HepG2 (cell line): ENCODE measurements at regions of chr2 and their contacts with region 1.

Region 1: DNA sequence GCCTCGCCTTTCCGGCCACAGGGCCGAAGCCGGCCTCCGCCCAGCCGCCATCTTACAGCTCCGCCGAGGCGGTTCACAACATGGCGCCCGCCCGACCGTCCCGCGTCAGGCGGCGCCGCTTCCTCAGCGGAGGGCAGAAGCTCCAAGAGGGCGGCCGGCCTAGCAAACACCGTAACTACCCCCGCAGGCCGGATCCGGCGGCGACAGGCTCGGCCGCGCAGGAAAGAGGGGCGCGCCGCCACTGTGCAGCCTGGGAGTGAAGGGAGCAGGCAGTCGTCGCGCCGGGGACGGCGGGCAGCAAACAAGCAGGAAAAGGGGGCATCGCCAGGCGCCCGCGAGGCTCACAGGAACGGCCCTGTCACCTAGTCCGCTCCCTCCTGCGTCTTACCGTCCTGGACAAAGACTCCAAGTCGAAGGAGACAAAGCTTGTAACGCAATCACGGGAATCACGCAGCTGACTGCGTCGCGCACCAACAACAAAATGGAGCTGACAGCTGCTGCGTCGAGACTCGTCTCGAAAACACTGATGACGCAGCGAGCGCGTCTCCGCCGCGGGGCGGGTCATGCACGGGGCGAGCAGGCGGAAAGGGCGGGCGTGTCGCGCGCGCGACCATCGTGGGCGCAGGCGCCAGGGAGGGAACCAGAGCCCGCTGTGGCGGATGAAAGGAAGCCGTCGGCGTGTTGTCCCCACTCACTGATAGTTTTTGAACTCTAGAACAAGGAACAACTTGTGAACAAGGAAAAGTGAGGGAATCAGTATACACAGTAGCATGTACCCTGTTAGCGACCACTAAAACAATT is at the start of gene CLK1:
- DNase-seq: peak; percentile 89
- ATAC-seq: peak; percentile 80
- H3K4me3 ChIP-seq: peak within 1 kb of the TSS; percentile 91 to 99 (median 97)
- H3K27ac ChIP-seq: peak within 1 kb of the TSS; percentile 98
- H3K4me1 ChIP-seq: peaks cover 55% of the 10 kb centered on the region
- H3K27me3 ChIP-seq: no peaks in the 10 kb centered on the region; a peak in 1 of 5 replicates
- CTCF ChIP-seq: no peak; the same call in 1 of the 2 replicates
- EP300 ChIP-seq: peak; percentile 27 to 54; a peak in 2 of 4 replicates
- POLR2A ChIP-seq: peak; percentile 99 to 100
- RAD21 ChIP-seq: peak; percentile 54
- total RNA-seq, gene CLK1: 35.2 and 66.6 TPM in 2 replicates

Region 2: DNA sequence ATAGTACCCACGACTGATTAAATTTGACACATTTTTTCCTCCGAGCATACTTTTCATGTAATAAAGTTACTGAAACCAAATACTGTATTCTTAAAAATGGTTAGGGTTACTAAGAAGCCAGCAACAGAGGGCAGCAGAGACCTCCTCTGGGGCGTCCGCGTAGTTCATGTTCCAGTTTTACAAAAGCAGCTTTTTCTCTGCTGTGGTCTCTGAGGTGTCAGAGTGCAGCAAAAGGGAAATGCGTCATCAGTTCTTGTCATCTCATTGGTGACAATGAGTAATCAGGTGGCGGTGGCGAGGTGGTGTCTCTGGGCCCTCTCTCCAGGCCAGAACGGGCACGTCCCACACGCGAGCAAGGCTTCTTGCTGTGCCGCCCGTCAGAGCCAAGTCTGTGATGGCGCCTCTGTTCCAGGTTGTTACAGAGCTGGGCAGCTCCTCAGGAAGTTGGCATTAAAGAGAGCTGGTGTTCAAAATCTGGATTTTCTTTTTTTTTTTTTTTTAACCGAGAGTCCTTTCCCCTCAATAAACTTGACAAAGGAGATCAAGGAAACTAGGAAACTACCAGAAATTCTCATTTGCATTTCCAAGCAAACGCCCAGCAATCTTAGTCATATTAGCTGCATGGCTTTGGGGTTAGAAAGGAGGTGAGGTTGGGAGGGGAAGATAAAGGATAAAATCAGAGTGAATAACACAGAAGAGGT is 151.2 kb before region 1 on chr2:
- CTCF ChIA-PET with region 1: no interaction called
- POLR2A ChIA-PET with region 1: interaction called, 21 read pairs
- in situ Hi-C with region 1: no loop called
- intact Hi-C with region 1: no loop called
- DNase-seq: peak; percentile 96
- ATAC-seq: peak; percentile 94
- H3K4me3 ChIP-seq: peak overlapping the region; percentile 35 to 65 (median 50); a peak in 5 of 6 replicates
- H3K27ac ChIP-seq: peak overlapping the region; percentile 41
- H3K4me1 ChIP-seq: peaks cover 20% of the 10 kb centered on the region
- H3K27me3 ChIP-seq: no peaks in the 10 kb centered on the region; a peak in 1 of 5 replicates
- CTCF ChIP-seq: peak; percentile 94
- EP300 ChIP-seq: peak in 1 of 2 experiments; percentile 47; a peak in 1 of 4 replicates
- POLR2A ChIP-seq: peak; percentile 74 to 92
- RAD21 ChIP-seq: peak; percentile 93

Region 3: DNA sequence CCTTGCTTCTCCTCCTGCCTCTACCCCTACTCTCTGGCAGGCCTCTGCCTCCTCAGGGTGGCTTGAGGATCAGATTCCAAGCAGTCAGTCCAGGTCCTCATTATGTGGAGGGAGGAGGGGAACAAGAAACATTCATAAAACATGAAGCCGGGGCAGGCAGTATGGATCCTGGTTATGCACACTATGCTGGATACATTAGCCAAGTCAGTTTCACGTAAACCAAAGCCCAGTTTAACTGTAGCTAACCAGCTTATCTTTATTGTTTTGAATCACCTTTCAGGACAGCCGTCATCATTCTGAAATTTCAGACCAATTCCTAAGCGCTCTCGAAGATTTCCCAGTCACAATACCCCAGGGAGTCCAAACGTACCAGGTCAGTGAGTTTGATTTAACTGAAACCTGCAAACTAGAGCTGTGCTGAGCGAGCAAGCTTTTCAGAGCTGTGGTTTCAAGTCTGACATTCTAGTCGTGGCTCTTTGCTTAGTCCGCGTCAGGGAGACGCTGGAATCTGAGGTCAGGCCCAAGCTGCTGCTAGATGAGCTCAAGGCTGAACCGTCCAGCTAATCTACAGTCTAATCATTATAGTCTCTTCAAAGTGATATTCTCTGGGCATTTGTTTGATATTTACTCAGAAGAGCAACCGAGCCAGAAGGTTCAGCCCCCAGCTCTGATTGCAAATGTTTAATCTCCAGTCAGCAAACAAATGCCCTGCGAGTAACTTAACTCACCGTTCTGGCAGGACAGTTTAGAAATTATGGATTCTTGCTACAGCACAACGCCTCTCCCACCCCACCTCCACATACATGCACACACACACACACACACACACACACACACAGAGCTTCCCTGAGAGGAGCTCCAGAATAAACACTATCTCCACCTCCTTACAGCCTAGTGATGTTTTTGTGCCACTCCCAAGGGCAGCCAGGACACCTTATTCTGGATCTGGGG is 116.4 kb before region 1 on chr2:
- CTCF ChIA-PET with region 1: interaction called, 4 read pairs
- POLR2A ChIA-PET with region 1: interaction called, 19 read pairs
- in situ Hi-C with region 1: no loop called
- intact Hi-C with region 1: no loop called
- DNase-seq: peak; percentile 99
- ATAC-seq: peak; percentile 94
- H3K4me3 ChIP-seq: peak overlapping the region; percentile 30 to 51 (median 46)
- H3K27ac ChIP-seq: peak overlapping the region; percentile 68
- H3K4me1 ChIP-seq: peaks cover 57% of the 10 kb centered on the region
- H3K27me3 ChIP-seq: peaks cover 0 to 7% of the 10 kb centered on the region in 2 experiments; a peak in 2 of 5 replicates
- CTCF ChIP-seq: no peak
- EP300 ChIP-seq: peak; percentile 73 to 91; a peak in 3 of 4 replicates
- POLR2A ChIP-seq: peak in 1 of 2 experiments; percentile 69; a peak in 2 of 4 replicates
- RAD21 ChIP-seq: no peak

Region 4: GRCh38 chr2:200811336-200812121 is 52.8 kb before region 1 on chr2 and contains the start of gene BZW1:
- CTCF ChIA-PET with region 1: no interaction called
- POLR2A ChIA-PET with region 1: interaction called, 16 read pairs
- in situ Hi-C with region 1: no loop called
- intact Hi-C with region 1: loop called (anchors 2 kb)
- DNase-seq: peak; percentile 95
- ATAC-seq: peak; percentile 89
- H3K4me3 ChIP-seq: peak within 1 kb of the TSS; percentile 89 to 99 (median 92)
- H3K27ac ChIP-seq: peak within 1 kb of the TSS; percentile 95
- H3K4me1 ChIP-seq: peaks cover 52% of the 10 kb centered on the region
- H3K27me3 ChIP-seq: no peaks in the 10 kb centered on the region; a peak in 1 of 5 replicates
- CTCF ChIP-seq: no peak; the same call in 1 of the 2 replicates
- EP300 ChIP-seq: peak in 1 of 2 experiments; percentile 22; a peak in 1 of 4 replicates
- POLR2A ChIP-seq: peak; percentile 90 to 96
- RAD21 ChIP-seq: no peak
- total RNA-seq, gene BZW1: 384 and 709 TPM in 2 replicates

Region 5: DNA sequence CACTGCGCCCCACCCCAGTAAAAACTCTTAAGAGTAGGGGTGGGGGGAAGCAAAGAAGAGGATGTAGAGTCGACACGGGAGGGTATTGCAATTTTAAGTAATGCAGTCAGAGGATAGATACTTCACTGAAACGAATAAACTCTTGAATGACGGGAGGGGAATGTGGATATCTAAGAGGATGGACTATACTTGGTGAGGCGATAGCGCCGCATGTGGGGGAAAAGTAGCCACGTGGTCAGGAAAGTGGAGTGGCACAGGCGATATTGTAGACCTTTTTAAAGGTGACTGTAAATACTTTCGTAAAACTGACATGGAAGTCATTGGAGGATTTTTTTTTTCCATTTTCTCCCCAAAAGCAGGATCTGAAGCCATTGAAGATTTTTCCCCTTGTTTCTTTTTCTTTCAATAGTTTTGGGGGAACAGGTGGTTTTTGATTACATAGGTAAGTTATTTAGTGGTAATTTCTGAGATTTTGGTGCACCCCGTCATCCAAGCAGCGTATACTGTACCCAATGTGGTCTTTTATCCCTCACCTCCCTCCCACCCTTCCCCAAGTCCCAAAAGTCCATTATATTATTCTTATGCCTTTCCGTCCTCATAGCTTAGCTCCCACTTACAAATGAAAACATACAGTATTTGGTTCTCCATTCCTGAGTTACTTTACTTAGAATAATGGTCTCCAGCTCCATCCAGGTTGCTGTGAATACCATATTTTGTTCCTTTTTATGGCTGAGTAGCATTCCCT is 13.7 kb before region 1 on chr2:
- CTCF ChIA-PET with region 1: no interaction called
- POLR2A ChIA-PET with region 1: interaction called, 52 read pairs
- in situ Hi-C with region 1: no loop called
- intact Hi-C with region 1: no loop called
- DNase-seq: no peak
- ATAC-seq: peak; percentile 7
- H3K4me3 ChIP-seq: no peak overlapping the region
- H3K27ac ChIP-seq: no peak overlapping the region
- H3K4me1 ChIP-seq: no peaks in the 10 kb centered on the region
- H3K27me3 ChIP-seq: no peaks in the 10 kb centered on the region
- CTCF ChIP-seq: no peak
- EP300 ChIP-seq: no peak
- POLR2A ChIP-seq: peak; percentile 16 to 31; a peak in 2 of 4 replicates
- RAD21 ChIP-seq: no peak

Region 6: DNA sequence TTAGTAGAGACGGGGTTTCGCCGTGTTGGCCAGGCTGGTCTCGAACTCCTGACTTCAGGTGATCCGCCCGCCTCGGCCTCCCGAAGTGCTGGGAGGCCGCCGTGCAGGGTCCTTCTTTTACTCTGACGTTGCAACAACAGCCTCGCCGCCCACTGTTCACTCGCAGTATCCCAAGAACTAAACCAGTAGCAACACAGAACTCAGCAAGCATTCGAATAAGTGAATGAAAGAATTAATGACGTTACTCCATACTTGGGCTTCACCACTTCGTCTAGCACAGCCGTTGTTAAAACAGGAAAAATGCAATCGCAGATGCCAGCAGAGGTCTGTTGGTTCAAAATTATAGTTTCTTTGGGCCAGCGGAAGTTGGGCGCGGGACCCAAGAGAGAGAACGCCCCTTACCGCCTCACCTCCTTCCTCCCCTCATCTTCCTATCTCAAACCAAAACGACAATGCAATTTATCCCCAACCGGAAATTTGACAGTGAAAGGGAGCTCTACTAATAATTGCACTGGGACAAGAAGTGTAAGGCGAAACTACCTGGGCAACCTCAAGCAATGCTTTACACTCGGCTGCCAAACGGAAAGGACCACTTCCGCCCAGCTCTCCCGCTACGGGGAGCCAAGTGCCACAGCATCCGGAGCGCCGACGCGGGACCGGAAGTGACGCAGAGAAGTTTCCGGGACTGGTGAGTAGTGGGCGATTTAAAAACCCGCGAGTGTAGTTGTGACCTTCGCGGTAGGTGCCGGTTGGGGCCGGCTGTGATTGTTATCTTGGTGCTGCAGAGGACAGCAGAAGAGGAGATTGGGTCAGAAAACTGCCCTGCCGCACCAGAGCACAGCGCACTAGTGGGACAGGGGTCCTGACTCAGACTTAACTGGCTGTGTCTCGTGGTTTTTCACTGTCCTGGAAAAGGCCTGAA is 24.6 kb after region 1 on chr2 and contains the starts of genes NIF3L1 and PPIL3:
- CTCF ChIA-PET with region 1: no interaction called
- POLR2A ChIA-PET with region 1: interaction called, 80 read pairs
- in situ Hi-C with region 1: no loop called
- intact Hi-C with region 1: loop called (anchors 1 kb)
- DNase-seq: peak; percentile 99
- ATAC-seq: peak; percentile 90
- H3K4me3 ChIP-seq: peak within 1 kb of the TSS; percentile 79 to 92 (median 90)
- H3K27ac ChIP-seq: peak within 1 kb of the TSS; percentile 97
- H3K4me1 ChIP-seq: peaks cover 34% of the 10 kb centered on the region
- H3K27me3 ChIP-seq: no peaks in the 10 kb centered on the region; a peak in 2 of 5 replicates
- CTCF ChIP-seq: no peak; the same call in none of the 2 replicates
- EP300 ChIP-seq: peak; percentile 30 to 68; a peak in 2 of 4 replicates
- POLR2A ChIP-seq: peak; percentile 69 to 95
- RAD21 ChIP-seq: 0 out of 2 replicates have a peak, but pooled peaks have one; percentile 17
- total RNA-seq, gene NIF3L1: 67.9 and 98.5 TPM in 2 replicates
- total RNA-seq, gene PPIL3: 98.7 and 126 TPM in 2 replicates